Cardiac septum (tissue), 1 donor: ENCODE measurements at regions of chr14 and their contacts with region 1.

Region 1: GRCh38 chr14:50101417-50101816 is 15.0 kb downstream of the VCPKMT start:
- DNase-seq: no peak

Region 2: GRCh38 chr14:49879683-49880204 is 221.7 kb before region 1 on chr14:
- intact Hi-C with region 1: loop called (anchors 5 kb)
- DNase-seq: no peak

Region 3: DNA sequence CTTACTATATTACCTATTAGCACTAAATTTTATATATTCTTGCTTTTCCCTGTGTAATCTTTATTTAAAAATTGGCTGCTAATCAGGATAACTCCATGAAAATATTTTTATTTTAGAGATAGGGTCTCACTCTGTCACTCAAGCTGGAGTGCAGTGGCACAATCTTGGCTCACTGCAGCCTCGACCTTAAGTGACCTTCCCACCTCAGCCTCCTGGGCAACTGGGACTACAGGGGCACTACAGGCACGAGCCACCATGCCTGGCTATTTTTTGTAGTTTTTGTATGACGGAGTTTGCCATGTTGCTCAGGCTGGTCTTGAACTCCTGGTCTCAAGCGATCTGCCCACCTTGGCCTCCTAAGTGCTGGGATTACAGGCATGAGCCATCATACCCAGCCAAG is 47.4 kb after region 1 on chr14:
- intact Hi-C with region 1: no loop called
- DNase-seq: no peak

Region 4: DNA sequence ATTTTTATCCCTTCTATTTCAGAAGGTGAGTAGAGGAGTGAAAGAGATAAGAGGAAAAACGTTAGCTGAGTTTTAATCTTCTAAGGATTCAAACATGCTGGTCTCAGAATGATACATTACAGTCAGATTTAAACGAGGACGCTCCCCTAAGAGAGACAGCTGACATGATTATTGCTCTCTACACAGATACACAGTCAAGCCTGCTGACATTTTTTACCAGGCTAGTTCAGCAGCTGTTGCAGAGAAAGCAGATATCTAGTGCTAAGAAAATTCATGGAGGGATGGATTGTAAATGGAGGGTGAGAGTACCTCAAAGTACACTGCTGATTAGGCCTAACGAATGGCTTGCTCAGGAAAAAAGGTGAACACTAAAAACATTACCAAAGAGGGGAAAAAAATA is 161.9 kb after region 1 on chr14:
- intact Hi-C with region 1: no loop called
- DNase-seq: no peak